HCT116 (cell line): ENCODE measurements at regions of chr13 and their contacts with region 1.

Region 1: GRCh38 chr13:70363991-70364390 is 255.7 kb upstream of the KLHL1 start:
- DNase-seq: no peak
- ATAC-seq: no peak
- H3K4me3 ChIP-seq: no peak overlapping the region
- H3K27ac ChIP-seq: no peak overlapping the region
- H3K4me1 ChIP-seq: no peaks in the 10 kb centered on the region
- H3K27me3 ChIP-seq: no peaks in the 10 kb centered on the region
- CTCF ChIP-seq: no peak
- POLR2A ChIP-seq: no peak
- RAD21 ChIP-seq: no peak

Region 2: DNA sequence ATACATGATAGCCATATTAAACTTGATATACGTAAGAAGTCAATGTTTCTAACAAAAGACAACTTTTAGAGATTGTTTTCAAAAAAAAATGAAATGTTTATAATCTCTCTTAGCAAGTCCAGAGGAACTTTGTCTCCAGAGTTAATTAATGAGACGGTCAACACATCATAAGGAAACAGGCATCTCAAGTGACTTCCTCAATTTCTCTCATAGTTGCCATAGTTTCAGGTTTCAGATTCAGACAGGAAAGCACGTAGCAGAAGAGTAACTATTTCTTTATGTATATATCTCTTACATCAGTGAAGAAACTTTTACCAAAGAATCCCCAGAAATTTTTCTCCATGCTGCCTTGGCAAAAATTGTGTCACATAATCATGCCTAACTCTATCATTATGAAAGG is 416.0 kb before region 1 on chr13:
- CTCF ChIA-PET with region 1: no interaction called
- POLR2A ChIA-PET with region 1: no interaction called
- RAD21 ChIA-PET with region 1: no interaction called
- intact Hi-C with region 1: loop called (anchors 10 kb)
- DNase-seq: no peak
- ATAC-seq: no peak
- H3K4me3 ChIP-seq: no peak overlapping the region
- H3K27ac ChIP-seq: no peak overlapping the region
- H3K4me1 ChIP-seq: no peaks in the 10 kb centered on the region
- H3K27me3 ChIP-seq: no peaks in the 10 kb centered on the region
- CTCF ChIP-seq: no peak
- POLR2A ChIP-seq: no peak
- RAD21 ChIP-seq: no peak

Region 3: GRCh38 chr13:70473907-70474306 is 109.9 kb after region 1 on chr13:
- CTCF ChIA-PET with region 1: no interaction called
- POLR2A ChIA-PET with region 1: no interaction called
- RAD21 ChIA-PET with region 1: no interaction called
- intact Hi-C with region 1: no loop called
- DNase-seq: no peak
- ATAC-seq: no peak
- H3K4me3 ChIP-seq: no peak overlapping the region
- H3K27ac ChIP-seq: no peak overlapping the region
- H3K4me1 ChIP-seq: no peaks in the 10 kb centered on the region
- H3K27me3 ChIP-seq: no peaks in the 10 kb centered on the region
- CTCF ChIP-seq: no peak
- POLR2A ChIP-seq: no peak
- RAD21 ChIP-seq: no peak

Region 4: GRCh38 chr13:70484931-70485330 is 120.9 kb after region 1 on chr13:
- CTCF ChIA-PET with region 1: no interaction called
- POLR2A ChIA-PET with region 1: no interaction called
- RAD21 ChIA-PET with region 1: no interaction called
- intact Hi-C with region 1: no loop called
- DNase-seq: no peak
- ATAC-seq: no peak
- H3K4me3 ChIP-seq: no peak overlapping the region
- H3K27ac ChIP-seq: no peak overlapping the region
- H3K4me1 ChIP-seq: no peaks in the 10 kb centered on the region
- H3K27me3 ChIP-seq: no peaks in the 10 kb centered on the region
- CTCF ChIP-seq: no peak
- POLR2A ChIP-seq: no peak
- RAD21 ChIP-seq: no peak